Aorta (tissue), 5 donors: ENCODE measurements at regions of chr1 and their contacts with region 1.

Region 1: GRCh38 chr1:70205434-70206118 is at the start of gene LRRC40:
- DNase-seq: peak; percentile 98 to 99
- ATAC-seq: peak; percentile 100
- H3K4me3 ChIP-seq: peak within 1 kb of the TSS; percentile 87 to 99
- H3K27ac ChIP-seq: peak within 1 kb of the TSS; percentile 69 to 88
- H3K4me1 ChIP-seq: peaks cover 0 to 2% of the 10 kb centered on the region in 2 donors
- H3K27me3 ChIP-seq: no peaks in the 10 kb centered on the region
- total RNA-seq, gene LRRC40: 11.5 to 12.7 TPM

Region 2: DNA sequence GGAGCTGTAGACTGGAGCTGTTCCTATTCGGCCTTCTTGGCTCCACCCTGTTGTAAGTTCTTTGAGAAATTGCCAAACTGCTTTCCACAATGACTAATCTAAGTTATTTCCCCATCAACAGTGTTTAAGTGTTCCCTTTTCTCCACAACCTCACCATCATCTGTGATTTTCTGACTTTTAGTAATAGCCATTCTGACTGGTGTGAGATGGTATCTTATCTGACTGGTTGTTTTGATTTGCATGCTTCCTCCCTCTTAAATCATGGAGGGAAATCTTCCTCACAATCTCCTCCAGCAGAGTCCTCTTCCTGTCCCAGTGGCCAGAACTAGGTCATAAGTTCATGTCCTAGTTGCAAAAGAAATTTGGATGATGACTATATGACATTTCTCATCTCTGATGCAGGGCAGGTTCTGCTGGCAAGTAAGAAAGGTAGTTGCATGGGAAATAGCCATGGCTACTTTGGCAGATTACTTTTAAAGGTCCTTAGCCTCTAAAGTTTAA is 294.2 kb before region 1 on chr1:
- intact Hi-C with region 1: no loop called
- DNase-seq: no peak
- ATAC-seq: peak; percentile 64
- H3K4me3 ChIP-seq: no peak overlapping the region
- H3K27ac ChIP-seq: no peak overlapping the region
- H3K4me1 ChIP-seq: peaks cover 2 to 5% of the 10 kb centered on the region in 2 donors
- H3K27me3 ChIP-seq: no peaks in the 10 kb centered on the region

Region 3: GRCh38 chr1:70354332-70355110 is 148.9 kb after region 1 on chr1 and contains the start of gene ANKRD13C:
- intact Hi-C with region 1: loop called in 1 of 2 experiments (anchors 10 kb)
- DNase-seq: peak; percentile 95 to 97
- ATAC-seq: peak; percentile 100
- H3K4me3 ChIP-seq: peak within 1 kb of the TSS; percentile 49 to 87
- H3K27ac ChIP-seq: peak within 1 kb of the TSS; percentile 78 to 91
- H3K4me1 ChIP-seq: peaks cover 0 to 2% of the 10 kb centered on the region in 2 donors
- H3K27me3 ChIP-seq: no peaks in the 10 kb centered on the region
- total RNA-seq, gene ANKRD13C: 25.6 to 28.3 TPM

Region 4: GRCh38 chr1:70410604-70411359 is 205.2 kb after region 1 on chr1 and contains the start of gene CTH:
- intact Hi-C with region 1: loop called in 1 of 2 experiments (anchors 10 kb)
- DNase-seq: peak; percentile 98
- ATAC-seq: peak; percentile 100
- H3K4me3 ChIP-seq: peak within 1 kb of the TSS; percentile 78 to 94
- H3K27ac ChIP-seq: peak within 1 kb of the TSS; percentile 91 to 100
- H3K4me1 ChIP-seq: no peaks in the 10 kb centered on the region
- H3K27me3 ChIP-seq: no peaks in the 10 kb centered on the region
- total RNA-seq, gene CTH: 1.8 to 3.7 TPM

Region 5: GRCh38 chr1:71080739-71081696 is 875.4 kb after region 1 on chr1 and contains the start of gene ZRANB2:
- intact Hi-C with region 1: loop called in 1 of 2 experiments (anchors 2 kb)
- DNase-seq: peak; percentile 91 to 95
- ATAC-seq: peak; percentile 99
- H3K4me3 ChIP-seq: peak within 1 kb of the TSS; percentile 97 to 98
- H3K27ac ChIP-seq: peak within 1 kb of the TSS; percentile 52 to 75
- H3K4me1 ChIP-seq: no peaks in the 10 kb centered on the region
- H3K27me3 ChIP-seq: no peaks in the 10 kb centered on the region
- total RNA-seq, gene ZRANB2: 91.8 to 118 TPM